Ascending aorta (tissue), 2 donors: ENCODE measurements at regions of chr12 and their contacts with region 1.

Region 1: GRCh38 chr12:123043536-123044001 is 63.1 kb downstream of the ARL6IP4 start:
- DNase-seq: peak; percentile 42 to 94
- H3K4me3 ChIP-seq: peak overlapping the region in 1 of 2 donors; percentile 32
- H3K27ac ChIP-seq: peak overlapping the region; percentile 56 to 76
- H3K4me1 ChIP-seq: peaks cover 0 to 8% of the 10 kb centered on the region in 2 donors
- H3K27me3 ChIP-seq: no peaks in the 10 kb centered on the region
- CTCF ChIP-seq: peak; percentile 72 to 87 (median 87)

Region 2: GRCh38 chr12:123106628-123107359 is 63.2 kb after region 1 on chr12:
- intact Hi-C with region 1: loop called (anchors 5 kb)
- DNase-seq: no peak
- H3K4me3 ChIP-seq: no peak overlapping the region
- H3K27ac ChIP-seq: no peak overlapping the region
- H3K4me1 ChIP-seq: peaks cover 7 to 11% of the 10 kb centered on the region in 2 donors
- H3K27me3 ChIP-seq: no peaks in the 10 kb centered on the region
- CTCF ChIP-seq: no peak

Region 3: GRCh38 chr12:123150744-123151456 is 107.3 kb after region 1 on chr12 and contains the start of gene PITPNM2:
- intact Hi-C with region 1: loop called (anchors 1 kb)
- DNase-seq: peak in 1 of 2 donors; percentile 79
- H3K4me3 ChIP-seq: peak within 1 kb of the TSS; percentile 82 to 90
- H3K27ac ChIP-seq: peak within 1 kb of the TSS; percentile 86 to 88
- H3K4me1 ChIP-seq: peaks cover 2 to 18% of the 10 kb centered on the region in 2 donors
- H3K27me3 ChIP-seq: no peaks in the 10 kb centered on the region
- CTCF ChIP-seq: peak in 1 of 3 experiments; percentile 56
- total RNA-seq, gene PITPNM2: 8.4 TPM